AG04450 (cell line): ENCODE measurements at regions of chr5 and their contacts with region 1.

Region 1: GRCh38 chr5:151651997-151652645 is 34.6 kb downstream of the SPARC start:
- DNase-seq: no peak
- H3K4me3 ChIP-seq: no peak overlapping the region
- H3K27ac ChIP-seq: no peak overlapping the region
- H3K27me3 ChIP-seq: no peaks in the 10 kb centered on the region
- CTCF ChIP-seq: peak; percentile 95

Region 2: DNA sequence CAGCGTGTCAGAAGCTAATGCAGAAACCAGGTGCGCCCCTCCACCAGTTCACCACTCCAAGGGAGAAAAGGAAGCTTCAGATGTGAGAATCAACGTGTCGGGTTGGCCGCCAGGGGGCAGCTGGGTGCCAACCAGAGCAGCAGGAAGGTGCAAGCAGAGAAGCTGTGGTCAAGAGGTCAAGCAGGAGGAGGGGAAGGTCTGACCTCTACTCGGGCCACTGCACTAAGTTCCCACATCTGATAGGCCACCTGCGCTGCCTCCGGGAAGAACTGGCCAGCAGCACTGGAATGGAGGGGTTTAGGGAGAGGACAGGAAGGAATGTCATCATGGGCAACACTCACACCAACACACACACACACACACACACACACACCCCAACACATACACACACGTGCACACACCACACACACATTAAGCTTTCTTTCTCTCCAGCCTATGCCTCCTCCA is 525.9 kb before region 1 on chr5:
- CTCF ChIA-PET with region 1: interaction called, 19 read pairs
- POLR2A ChIA-PET with region 1: no interaction called
- DNase-seq: no peak
- H3K4me3 ChIP-seq: no peak overlapping the region
- H3K27ac ChIP-seq: no peak overlapping the region
- H3K27me3 ChIP-seq: no peaks in the 10 kb centered on the region
- CTCF ChIP-seq: peak; percentile 69

Region 3: GRCh38 chr5:151315998-151316597 is 336.0 kb before region 1 on chr5:
- CTCF ChIA-PET with region 1: interaction called, 33 read pairs
- POLR2A ChIA-PET with region 1: no interaction called
- DNase-seq: peak; percentile 26
- H3K4me3 ChIP-seq: no peak overlapping the region
- H3K27ac ChIP-seq: no peak overlapping the region
- H3K27me3 ChIP-seq: no peaks in the 10 kb centered on the region
- CTCF ChIP-seq: peak; percentile 95

Region 4: DNA sequence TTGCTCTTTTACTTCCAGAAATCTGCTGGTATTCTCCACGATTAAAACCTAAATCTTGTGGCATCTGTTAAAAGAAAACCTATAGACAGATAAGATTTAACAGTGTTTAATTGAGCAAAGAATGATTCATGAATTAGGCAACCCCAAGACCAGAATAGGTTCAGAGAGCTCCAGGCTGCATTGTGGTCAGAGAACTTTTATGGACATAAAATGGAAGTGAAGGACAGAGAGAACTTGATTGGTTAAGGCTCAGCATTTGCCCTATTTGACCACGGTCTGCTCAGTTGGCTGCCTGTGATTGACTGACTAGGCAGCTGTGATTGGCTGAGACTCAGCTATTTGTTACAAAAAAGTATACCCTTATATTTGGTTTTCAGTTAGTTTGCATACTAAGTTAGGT is 294.3 kb before region 1 on chr5:
- CTCF ChIA-PET with region 1: no interaction called
- POLR2A ChIA-PET with region 1: no interaction called
- DNase-seq: no peak
- H3K4me3 ChIP-seq: no peak overlapping the region
- H3K27ac ChIP-seq: no peak overlapping the region
- H3K27me3 ChIP-seq: no peaks in the 10 kb centered on the region
- CTCF ChIP-seq: no peak

Region 5: GRCh38 chr5:151483176-151483575 is 168.9 kb before region 1 on chr5:
- CTCF ChIA-PET with region 1: interaction called, 12 read pairs
- POLR2A ChIA-PET with region 1: no interaction called
- DNase-seq: no peak
- H3K4me3 ChIP-seq: no peak overlapping the region
- H3K27ac ChIP-seq: no peak overlapping the region
- H3K27me3 ChIP-seq: no peaks in the 10 kb centered on the region
- CTCF ChIP-seq: no peak

Region 6: DNA sequence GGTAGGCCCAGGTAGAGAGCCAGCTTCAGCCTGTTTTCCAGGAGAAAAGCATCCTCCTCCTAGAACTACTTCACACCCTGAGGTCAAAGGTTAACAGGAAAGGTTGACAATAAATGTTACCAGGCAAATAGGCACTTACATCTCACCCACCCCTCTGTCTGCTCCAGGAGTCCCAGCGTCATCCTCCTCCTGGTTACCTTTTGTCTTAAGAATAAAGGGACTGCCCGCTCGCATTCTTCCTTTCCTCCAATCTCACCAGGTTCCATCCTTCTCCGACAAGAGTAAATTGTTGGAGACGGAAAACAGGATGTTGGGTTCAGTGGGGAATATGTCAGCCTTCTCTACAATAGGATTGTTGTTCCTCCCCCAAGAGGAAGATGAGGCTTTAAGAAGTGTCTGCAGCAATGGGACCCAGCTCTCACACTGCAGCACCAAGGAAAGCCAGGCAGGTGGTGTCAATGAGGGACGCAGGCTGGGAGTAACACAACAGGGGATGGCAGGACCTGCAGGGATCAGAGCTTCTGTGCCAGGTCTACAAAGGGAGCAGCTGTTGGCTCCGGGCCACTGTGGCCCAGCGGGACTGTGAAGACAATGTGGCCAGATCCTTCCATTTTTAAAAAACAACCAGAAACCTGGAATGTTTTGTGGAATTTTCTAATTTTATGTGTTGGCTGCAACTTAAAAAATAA is 90.0 kb before region 1 on chr5:
- CTCF ChIA-PET with region 1: no interaction called
- POLR2A ChIA-PET with region 1: no interaction called
- DNase-seq: no peak
- H3K4me3 ChIP-seq: no peak overlapping the region
- H3K27ac ChIP-seq: no peak overlapping the region
- H3K27me3 ChIP-seq: peaks cover 13% of the 10 kb centered on the region
- CTCF ChIP-seq: no peak

Region 7: DNA sequence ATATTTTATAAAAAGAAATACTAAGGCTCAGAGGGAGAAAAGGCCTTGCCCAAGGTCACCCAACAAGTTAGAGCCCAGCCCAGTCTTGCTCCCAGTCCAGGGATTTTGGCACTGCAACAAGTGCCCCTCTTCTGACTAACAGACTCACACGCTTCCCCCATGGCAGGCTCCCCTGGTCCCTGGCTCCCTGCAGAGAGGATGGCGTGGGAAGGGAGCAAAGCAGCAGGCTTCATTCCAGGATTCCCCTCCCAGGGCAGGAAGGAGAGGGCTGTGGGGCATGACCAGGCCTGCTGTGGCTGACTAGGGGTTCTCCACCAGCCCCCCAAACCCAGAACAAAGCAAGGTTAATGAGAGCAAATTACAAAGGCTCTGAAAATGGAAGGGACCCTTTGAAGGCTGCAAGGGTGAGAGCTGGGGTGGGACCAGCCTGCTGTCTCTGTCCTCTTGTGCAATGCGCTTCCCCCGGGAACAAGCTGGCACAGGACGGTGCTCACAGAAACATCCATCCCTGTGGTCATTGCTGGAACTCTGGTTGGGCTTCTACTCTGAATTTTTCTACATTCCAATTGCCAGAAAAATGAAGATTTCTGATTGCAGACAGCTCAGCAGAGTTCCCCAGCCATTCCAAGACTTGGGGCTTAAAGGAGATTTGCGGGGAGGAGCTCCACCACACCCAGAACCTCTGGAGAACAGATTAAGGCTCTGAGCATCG is 23.9 kb before region 1 on chr5:
- CTCF ChIA-PET with region 1: interaction called, 16 read pairs
- POLR2A ChIA-PET with region 1: no interaction called
- DNase-seq: no peak
- H3K4me3 ChIP-seq: no peak overlapping the region
- H3K27ac ChIP-seq: no peak overlapping the region
- H3K27me3 ChIP-seq: peaks cover 5% of the 10 kb centered on the region
- CTCF ChIP-seq: no peak

Region 8: GRCh38 chr5:151740336-151740942 is 88.3 kb after region 1 on chr5:
- CTCF ChIA-PET with region 1: interaction called, 136 read pairs
- POLR2A ChIA-PET with region 1: interaction called, 53 read pairs
- DNase-seq: peak; percentile 85
- H3K4me3 ChIP-seq: peak overlapping the region; percentile 27
- H3K27ac ChIP-seq: peak overlapping the region; percentile 99
- H3K27me3 ChIP-seq: no peaks in the 10 kb centered on the region
- CTCF ChIP-seq: peak; percentile 84